Mammary epithelial cell (primary cell): ENCODE measurements at regions of chr1 and their contacts with region 1.

Region 1: DNA sequence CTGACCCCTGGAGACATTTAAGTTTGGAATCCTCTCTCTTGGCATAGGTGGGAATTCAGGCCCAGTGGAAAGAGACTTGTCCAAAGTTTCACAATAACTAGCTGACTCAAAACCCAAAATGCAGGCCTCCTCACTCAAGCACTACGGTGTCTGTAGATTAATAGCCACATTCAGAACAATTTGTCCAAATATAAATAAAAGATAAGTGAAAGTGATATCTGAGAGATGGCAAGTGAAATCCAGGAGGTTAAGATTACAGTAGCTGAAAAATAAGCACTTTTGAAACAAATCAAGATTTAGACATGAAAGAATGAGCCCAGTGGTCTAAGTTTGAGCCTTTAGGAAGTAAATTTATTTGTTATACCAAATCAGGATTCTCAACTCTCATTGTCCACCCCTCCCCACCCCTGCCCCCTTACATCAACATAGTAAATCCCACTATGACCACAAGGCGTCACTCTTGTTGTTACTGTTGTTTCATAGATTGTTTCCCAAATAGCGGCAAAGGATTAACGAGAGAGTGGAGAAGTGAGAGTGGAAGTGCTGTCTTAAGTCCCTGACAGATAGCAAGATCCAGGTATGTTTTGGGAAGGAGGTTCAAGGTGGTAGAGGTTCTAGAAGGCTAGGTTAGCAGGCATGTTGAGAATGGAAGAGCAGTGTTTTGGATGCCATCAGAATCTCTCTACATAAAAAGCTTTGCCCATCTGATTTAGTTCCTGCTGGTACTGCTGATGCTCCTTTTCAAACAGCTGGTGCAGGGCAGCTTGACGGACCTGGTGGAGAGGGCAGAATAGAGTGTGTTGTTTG is 7.1 kb upstream of the TPM3 start:
- DNase-seq: peak; percentile 48
- H3K4me3 ChIP-seq: no peak overlapping the region
- H3K27ac ChIP-seq: no peak overlapping the region
- H3K4me1 ChIP-seq: peaks cover 9% of the 10 kb centered on the region
- H3K27me3 ChIP-seq: no peaks in the 10 kb centered on the region
- CTCF ChIP-seq: peak; percentile 52 to 57

Region 2: GRCh38 chr1:154183045-154183915 is 15.7 kb before region 1 on chr1:
- CTCF ChIA-PET with region 1: interaction called, 4 read pairs
- dilution Hi-C with region 1: no loop called
- in situ Hi-C with region 1: no loop called
- intact Hi-C with region 1: loop called (anchors 1 kb)
- DNase-seq: peak; percentile 99
- H3K4me3 ChIP-seq: peak overlapping the region; percentile 85 to 96 (median 91)
- H3K27ac ChIP-seq: peak overlapping the region; percentile 94
- H3K4me1 ChIP-seq: peaks cover 34% of the 10 kb centered on the region
- H3K27me3 ChIP-seq: no peaks in the 10 kb centered on the region
- CTCF ChIP-seq: peak in 1 of 2 donors; percentile 10

Region 3: DNA sequence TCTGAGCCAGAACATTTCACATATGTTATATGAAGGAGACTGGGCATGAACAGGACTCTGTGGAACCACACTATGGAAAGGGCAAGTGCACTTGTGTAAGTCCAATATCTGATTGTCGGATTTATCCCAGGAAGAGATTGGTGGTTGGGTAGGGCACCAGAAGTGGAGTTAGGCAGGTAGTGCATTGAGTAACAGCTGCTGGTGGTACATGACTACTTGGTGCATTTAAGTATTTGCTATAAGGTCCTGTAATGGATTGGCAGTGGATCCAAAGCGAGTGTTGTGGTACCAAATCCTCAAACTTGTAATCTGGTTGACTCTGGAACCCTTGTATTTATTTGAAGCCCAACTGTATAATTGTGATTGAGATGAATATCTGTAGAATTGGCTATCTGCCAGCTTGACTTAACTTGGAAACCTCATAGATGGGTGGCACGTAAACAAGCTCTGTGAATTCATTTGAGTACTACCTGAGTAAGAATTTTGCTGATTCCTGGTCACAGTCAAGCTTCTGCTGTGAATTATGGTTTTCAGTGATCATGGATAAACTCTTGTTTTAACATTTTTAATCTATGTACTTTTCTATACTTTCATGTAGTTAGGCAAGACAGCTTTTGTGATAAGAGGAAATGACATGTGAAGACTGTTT is 42.9 kb after region 1 on chr1:
- CTCF ChIA-PET with region 1: no interaction called
- dilution Hi-C with region 1: no loop called
- in situ Hi-C with region 1: no loop called
- intact Hi-C with region 1: loop called (anchors 1 kb)
- DNase-seq: no peak
- H3K4me3 ChIP-seq: no peak overlapping the region
- H3K27ac ChIP-seq: no peak overlapping the region
- H3K4me1 ChIP-seq: no peaks in the 10 kb centered on the region
- H3K27me3 ChIP-seq: no peaks in the 10 kb centered on the region
- CTCF ChIP-seq: no peak

Region 4: DNA sequence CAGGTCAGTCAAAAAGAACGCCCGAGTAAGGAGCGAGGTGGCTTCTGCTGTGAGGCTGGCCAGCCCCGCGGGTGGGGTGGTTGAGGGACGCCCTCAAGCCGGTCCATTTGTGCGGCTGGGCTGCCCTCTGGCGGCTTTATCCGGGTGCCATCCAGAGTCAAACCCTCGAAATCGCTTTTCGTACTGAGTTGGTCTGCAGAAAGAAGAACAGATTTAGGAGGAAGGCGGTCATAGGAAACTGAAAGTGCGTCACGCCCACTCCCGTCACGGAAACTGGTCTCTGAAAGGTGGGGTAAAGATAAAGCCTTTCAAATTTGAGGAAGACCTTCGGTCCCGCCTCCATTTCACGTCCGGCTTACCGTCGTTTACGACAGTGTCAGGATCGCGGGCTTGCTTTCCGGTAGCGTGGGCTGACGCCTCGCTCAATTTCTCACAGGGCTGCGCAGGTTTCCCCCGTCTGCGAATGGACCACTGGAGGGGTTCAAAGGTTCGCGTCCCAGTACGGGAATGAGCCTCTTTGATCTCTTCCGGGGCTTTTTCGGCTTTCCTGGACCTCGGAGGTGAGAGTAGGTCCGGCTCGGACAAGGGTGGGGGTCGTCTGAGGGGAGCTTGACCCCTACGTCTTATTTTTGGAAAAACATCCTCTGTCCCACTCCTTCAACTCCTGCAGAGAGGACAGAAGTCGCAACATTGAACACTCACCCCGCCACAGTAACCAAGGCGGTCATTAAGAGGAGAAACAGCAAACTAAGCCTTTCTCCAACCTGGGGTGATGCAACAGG is 73.4 kb after region 1 on chr1 and contains the start of gene HAX1:
- CTCF ChIA-PET with region 1: no interaction called
- dilution Hi-C with region 1: no loop called
- in situ Hi-C with region 1: no loop called
- intact Hi-C with region 1: loop called (anchors 1 kb)
- DNase-seq: peak; percentile 96
- H3K4me3 ChIP-seq: peak within 1 kb of the TSS; percentile 72 to 96 (median 95)
- H3K27ac ChIP-seq: peak within 1 kb of the TSS; percentile 76
- H3K4me1 ChIP-seq: peaks cover 4% of the 10 kb centered on the region
- H3K27me3 ChIP-seq: no peaks in the 10 kb centered on the region
- CTCF ChIP-seq: peak; percentile 61 to 82
- total RNA-seq, gene HAX1: 135 to 174 TPM

Region 5: DNA sequence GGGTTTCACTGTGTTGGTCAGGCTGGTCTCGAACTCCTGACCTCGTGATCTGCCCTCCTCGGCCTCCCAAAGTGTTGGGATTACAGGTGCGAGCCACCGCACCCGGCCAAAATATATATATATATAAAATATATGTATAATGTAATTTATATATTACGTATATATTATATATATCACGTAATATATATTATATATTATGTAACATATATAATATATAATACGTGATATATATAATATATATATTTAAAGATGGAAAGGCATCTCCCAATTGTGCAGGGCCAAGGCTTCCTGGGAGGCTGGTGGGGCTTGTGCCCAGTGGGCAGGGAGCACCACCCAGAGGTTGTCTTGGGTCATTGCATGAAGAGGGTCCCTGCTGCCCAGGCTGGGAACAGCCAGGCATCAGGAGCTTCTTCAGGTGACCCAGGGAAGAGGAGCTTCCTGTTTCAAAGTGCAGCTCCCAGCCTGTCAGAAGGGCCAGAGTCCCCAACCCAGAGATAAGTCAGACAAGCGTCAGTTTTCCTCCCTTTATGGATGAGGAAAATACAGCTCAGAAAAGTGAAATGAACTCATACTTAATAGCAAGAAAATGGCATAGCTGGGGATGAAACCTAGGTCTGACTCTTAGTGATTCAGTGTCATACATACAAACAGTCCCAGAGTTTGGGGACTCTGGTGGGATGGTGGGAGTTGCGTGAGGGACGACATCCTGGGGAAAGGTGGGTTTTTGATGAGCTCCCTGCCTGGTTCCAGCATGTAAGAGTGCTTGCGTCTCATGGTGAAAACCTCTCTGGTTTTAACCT is 347.5 kb after region 1 on chr1:
- CTCF ChIA-PET with region 1: no interaction called
- dilution Hi-C with region 1: no loop called
- in situ Hi-C with region 1: no loop called
- intact Hi-C with region 1: loop called (anchors 10 kb)
- DNase-seq: peak; percentile 44
- H3K4me3 ChIP-seq: no peak overlapping the region
- H3K27ac ChIP-seq: no peak overlapping the region
- H3K4me1 ChIP-seq: peaks cover 13% of the 10 kb centered on the region
- H3K27me3 ChIP-seq: no peaks in the 10 kb centered on the region
- CTCF ChIP-seq: peak; percentile 55 to 81